ENCODE measurements at regions of chr21 and their contacts with region 1.

Region 1: DNA sequence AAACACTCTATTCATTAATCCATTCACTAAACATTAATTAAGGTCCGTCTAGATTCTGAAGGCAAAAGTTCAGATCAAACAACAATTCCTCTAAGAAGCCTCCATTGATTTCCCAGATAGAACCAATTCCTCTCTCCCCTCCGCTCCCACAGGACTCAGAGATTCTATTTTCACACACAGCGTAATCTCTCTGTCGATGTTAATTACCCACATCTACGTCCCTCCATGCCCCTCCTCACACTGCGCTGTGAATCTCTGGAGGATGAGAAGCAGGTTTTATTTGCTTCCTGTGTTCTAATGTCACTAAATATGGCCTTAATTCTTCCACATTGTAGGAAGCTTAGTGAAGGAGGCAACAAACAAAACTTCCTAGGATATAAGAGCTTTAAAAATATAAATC is 306.7 kb downstream of the DSCAM start:
- DNase-seq: no peak
- ATAC-seq: no peak
- H3K4me3 ChIP-seq: no peak overlapping the region
- H3K27ac ChIP-seq: no peak overlapping the region
- H3K4me1 ChIP-seq: no peaks in the 10 kb centered on the region
- H3K27me3 ChIP-seq: no peaks in the 10 kb centered on the region
- CTCF ChIP-seq: no peak
- EP300 ChIP-seq: no peak
- POLR2A ChIP-seq: no peak
- RAD21 ChIP-seq: no peak

Region 2: GRCh38 chr21:39593360-39593921 is 946.8 kb before region 1 on chr21:
- CTCF ChIA-PET with region 1: no interaction called
- POLR2A ChIA-PET with region 1: no interaction called
- in situ Hi-C with region 1: loop called (anchors 5 kb)
- intact Hi-C with region 1: no loop called
- DNase-seq: no peak
- ATAC-seq: no peak
- H3K4me3 ChIP-seq: no peak overlapping the region
- H3K27ac ChIP-seq: no peak overlapping the region
- H3K4me1 ChIP-seq: no peaks in the 10 kb centered on the region
- H3K27me3 ChIP-seq: peaks cover 9 to 11% of the 10 kb centered on the region in 2 experiments; a peak in 2 of 5 replicates
- CTCF ChIP-seq: no peak
- EP300 ChIP-seq: no peak
- POLR2A ChIP-seq: no peak
- RAD21 ChIP-seq: no peak

Measured in K562 (cell line).